ENCODE measurements at regions of chr17 and their contacts with region 1.

Region 1: DNA sequence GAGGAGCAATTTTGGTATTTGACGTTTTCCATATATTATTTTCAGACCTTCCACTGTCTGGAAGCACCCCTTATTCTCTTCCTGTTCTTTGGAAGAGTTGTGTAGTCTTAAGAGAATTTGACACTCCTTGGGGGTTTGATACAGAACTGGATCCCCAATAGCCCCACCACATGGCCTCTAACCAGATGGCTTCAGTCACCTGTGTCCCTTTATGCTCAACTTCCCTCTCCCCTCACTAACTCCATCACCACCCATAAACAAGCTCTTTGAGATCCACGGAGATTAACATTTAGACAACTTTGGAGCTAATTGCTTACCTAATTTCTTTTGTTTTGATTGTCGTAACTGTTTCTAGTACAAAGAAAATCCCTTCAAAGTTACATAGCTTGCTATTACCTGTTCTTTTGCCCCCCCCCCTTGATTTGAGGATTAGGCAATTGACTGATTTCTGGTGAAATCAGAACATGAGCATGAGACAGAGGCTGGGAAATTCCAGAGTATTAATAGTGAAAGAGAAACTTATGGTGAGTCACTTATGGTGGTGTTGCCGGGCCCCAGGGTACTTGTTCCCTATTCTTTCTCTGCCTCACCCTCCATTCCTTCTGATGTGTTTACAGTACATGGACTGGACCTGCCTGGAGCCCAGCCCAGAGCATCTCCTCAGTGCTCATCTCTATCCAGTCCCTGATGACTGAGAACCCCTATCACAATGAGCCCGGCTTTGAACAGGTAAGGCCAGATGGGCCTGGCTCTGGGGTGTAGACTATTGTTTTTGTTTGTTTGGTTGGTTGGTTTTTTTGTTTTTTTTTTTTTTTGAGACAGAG is 7.5 kb downstream of the UBE2Z start:
- DNase-seq: no peak
- ATAC-seq: no peak
- H3K4me3 Mint-ChIP-seq: no peak overlapping the region
- H3K27ac Mint-ChIP-seq: no peak overlapping the region
- H3K4me1 Mint-ChIP-seq: peaks cover 9% of the 10 kb centered on the region
- H3K27me3 Mint-ChIP-seq: no peaks in the 10 kb centered on the region
- CTCF ChIP-seq: no peak

Region 2: DNA sequence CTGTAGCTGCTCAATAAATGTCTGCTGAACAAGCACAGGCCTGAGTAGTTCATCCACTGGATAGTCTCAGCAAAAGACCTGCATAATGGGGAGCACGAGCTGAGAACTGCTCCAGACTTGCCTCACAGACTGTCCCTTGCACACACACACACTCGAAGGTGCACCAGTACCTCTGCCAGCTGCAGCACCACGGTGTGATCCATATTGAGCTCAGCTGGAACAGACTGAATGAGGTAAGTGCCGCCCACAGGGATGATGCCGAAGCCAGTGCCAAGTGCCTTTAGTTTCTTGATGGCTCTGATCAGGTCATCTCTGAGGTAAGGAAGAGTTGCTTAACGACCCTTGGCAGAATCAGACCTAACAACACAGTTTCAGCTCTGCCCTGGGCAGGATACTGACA is 17.4 kb after region 1 on chr17:
- CTCF ChIA-PET with region 1: no interaction called
- POLR2A ChIA-PET with region 1: interaction called, 10 read pairs
- DNase-seq: no peak
- ATAC-seq: no peak
- H3K4me3 Mint-ChIP-seq: no peak overlapping the region
- H3K27ac Mint-ChIP-seq: no peak overlapping the region
- H3K4me1 Mint-ChIP-seq: no peaks in the 10 kb centered on the region
- H3K27me3 Mint-ChIP-seq: no peaks in the 10 kb centered on the region
- CTCF ChIP-seq: no peak

Region 3: GRCh38 chr17:49053171-49053829 is 137.6 kb after region 1 on chr17:
- CTCF ChIA-PET with region 1: no interaction called
- POLR2A ChIA-PET with region 1: no interaction called
- DNase-seq: peak; percentile 26
- ATAC-seq: peak; percentile 53
- H3K4me3 Mint-ChIP-seq: 0 out of 2 replicates have a peak overlapping the region, but pooled peaks have one; percentile 19
- H3K27ac Mint-ChIP-seq: peak overlapping the region; percentile 91
- H3K4me1 Mint-ChIP-seq: peaks cover 44% of the 10 kb centered on the region
- H3K27me3 Mint-ChIP-seq: no peaks in the 10 kb centered on the region
- CTCF ChIP-seq: no peak

Measured in WTC11 (cell line).